Activated T-helper 2 cell treated with anti-CD3 and anti-CD28 coated beads, Interferon-gamma antibody, Interleukin-2, Interleukin-4, amounts not matched to agents 10 μg/mL and 5 μg/mL and 100 μg/mL, durations not matched to agents 14 hours and 24 hours and 36 hours (primary cell): ENCODE measurements at regions of chr12 and their contacts with region 1.

Region 1: GRCh38 chr12:57476162-57476992 is 3.3 kb downstream of the ARHGAP9 start:
- DNase-seq: peak; percentile 72
- H3K4me3 Mint-ChIP-seq: peak overlapping the region; percentile 93
- H3K27ac Mint-ChIP-seq: peak overlapping the region; percentile 100
- H3K4me1 Mint-ChIP-seq: peaks cover 47% of the 10 kb centered on the region
- H3K27me3 Mint-ChIP-seq: no peaks in the 10 kb centered on the region

Region 2: GRCh38 chr12:57323416-57323815 is 153.0 kb before region 1 on chr12:
- intact Hi-C with region 1: no loop called
- DNase-seq: no peak
- H3K4me3 Mint-ChIP-seq: no peak overlapping the region
- H3K27ac Mint-ChIP-seq: no peak overlapping the region
- H3K4me1 Mint-ChIP-seq: peaks cover 2% of the 10 kb centered on the region
- H3K27me3 Mint-ChIP-seq: no peaks in the 10 kb centered on the region

Region 3: DNA sequence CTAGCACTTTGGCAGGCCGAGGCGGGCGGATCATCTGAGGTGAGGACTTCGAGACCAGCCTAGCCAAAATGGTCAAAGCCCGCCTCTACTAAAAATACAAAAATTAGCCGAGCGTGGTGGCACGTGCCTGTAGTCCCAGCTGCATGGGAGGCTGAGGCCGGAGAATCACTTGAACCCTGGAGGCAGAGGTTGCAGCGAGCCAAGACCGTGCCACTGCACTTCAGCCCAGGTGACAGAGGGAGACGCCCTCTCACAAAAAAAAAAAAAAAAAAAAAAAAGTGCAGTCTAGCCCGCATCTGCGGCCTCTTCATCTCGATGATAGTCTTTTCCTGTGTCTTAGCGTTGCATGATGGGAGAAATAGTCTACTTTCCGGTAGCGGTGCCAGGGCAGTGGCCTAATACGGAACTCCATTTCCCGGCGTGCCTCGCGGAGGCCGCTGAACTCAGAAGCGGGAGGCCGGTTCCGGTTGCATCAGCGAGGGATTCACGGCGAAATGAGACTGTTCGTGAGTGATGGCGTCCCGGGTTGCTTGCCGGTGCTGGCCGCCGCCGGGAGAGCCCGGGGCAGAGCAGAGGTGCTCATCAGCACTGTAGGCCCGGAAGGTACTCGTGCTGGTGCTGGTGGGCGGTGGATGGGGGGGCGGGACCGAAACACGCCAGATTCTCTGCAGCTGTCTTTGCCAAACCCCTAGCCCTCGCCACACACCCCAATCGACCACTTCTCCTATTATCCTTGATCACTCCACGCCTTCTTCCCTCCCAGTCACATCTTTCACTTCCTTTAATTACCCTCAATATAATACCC is 11.4 kb after region 1 on chr12 and contains the start of gene MARS1:
- intact Hi-C with region 1: loop called (anchors 1 kb)
- DNase-seq: peak; percentile 92
- H3K4me3 Mint-ChIP-seq: peak within 1 kb of the TSS; percentile 99
- H3K27ac Mint-ChIP-seq: peak within 1 kb of the TSS; percentile 95
- H3K4me1 Mint-ChIP-seq: peaks cover 25% of the 10 kb centered on the region
- H3K27me3 Mint-ChIP-seq: no peaks in the 10 kb centered on the region
- total RNA-seq, gene MARS1: 249 and 257 TPM in 2 replicates